Endothelial cell of umbilical vein (primary cell): ENCODE measurements at regions of chr4 and their contacts with region 1.

Region 1: DNA sequence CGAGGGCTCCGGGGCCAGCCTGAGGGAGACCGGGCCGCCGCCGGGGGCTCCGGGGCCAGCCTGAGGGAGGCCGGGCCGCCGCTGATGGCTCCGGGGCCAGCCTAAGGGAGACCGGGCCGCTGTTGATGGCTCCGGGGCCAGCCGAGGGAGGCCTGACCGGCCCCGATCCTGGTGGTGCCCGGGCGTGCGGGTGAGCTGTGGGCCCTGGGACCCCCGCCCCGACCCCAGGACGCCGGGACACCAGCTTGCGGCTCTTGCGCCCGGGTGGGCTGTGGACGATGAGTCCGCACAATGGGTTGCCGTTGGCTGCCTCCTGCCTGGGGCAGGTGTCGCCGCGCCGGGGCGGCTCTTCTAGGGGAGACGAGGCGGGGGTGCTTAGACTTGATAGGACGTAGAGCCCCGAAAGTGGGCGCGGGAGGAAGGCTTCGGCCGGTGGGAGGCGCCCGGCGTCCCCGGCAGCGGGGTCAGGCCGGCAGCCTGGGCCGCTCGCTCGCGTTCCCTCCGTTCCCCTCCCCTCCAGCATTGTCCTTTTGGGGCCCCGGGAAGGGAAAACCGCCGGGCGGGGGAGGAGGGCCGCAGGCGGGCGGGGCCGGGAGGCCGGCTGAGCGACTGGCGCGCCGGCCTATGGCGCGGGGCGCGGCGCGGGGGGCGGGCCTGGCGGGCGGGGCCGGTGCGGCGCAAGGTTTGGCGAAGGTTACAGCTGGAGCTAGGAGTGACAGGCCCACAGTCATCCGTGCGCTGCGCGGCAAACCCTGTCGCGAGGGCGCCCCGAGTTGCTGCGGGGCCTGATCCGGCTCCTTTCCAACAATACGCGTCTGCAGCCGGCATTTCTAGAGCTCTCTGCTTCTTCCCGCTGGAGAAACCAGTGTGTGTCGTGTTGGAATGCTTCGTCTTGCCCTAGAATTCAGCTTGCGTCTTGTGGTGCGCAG is 790 bp downstream of the KIAA0232 start:
- DNase-seq: peak; percentile 84
- H3K4me3 ChIP-seq: peak overlapping the region; percentile 75 to 99 (median 83)
- H3K27ac ChIP-seq: peak overlapping the region; percentile 89
- H3K4me1 ChIP-seq: peaks cover 10% of the 10 kb centered on the region
- H3K27me3 ChIP-seq: no peaks in the 10 kb centered on the region
- CTCF ChIP-seq: no peak
- POLR2A ChIP-seq: no peak

Region 2: DNA sequence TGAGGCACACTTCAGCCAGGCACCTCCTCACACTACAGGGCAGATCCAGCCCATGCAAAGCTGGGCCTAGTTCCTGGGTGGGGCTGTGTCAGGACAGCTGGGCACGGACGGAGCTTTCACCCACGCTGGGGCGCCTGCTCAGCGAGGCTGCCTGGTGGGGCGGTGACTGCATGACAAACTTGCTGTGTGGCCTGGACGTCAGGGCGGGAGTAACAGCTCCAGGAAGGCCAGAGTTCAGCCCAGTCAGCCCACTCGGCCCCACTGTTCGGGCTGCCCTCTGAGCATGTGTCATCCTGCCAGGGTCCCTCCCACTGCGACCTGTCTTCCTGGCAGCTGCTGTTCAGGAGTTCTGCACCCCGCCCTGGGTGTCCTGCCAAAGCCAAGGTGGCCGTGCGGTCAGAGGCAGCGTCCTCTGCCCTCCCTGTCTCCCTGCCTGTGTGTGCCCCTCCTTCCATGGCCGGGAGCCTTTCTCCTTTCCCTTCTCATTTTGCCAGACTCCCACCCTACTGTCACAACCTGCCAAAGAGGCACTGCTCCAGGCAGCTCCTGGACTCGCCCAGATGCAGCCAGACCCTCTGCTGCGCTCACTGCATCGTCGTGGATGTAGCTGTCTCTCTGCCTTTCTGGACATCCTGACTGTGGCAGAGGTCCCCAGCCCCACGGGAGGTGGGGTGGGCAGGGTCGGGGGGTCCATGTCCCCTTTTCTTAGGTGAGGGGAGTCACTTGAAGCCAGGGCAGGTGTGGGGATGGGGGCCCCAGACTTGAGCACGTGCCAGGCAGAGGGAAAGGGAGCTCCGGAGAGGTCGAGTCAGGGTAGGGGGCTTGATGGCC is 33.8 kb before region 1 on chr4:
- CTCF ChIA-PET with region 1: no interaction called
- POLR2A ChIA-PET with region 1: no interaction called
- dilution Hi-C with region 1: no loop called
- intact Hi-C with region 1: no loop called
- DNase-seq: peak; percentile 34
- H3K4me3 ChIP-seq: no peak overlapping the region
- H3K27ac ChIP-seq: no peak overlapping the region
- H3K4me1 ChIP-seq: peaks cover 6% of the 10 kb centered on the region
- H3K27me3 ChIP-seq: no peaks in the 10 kb centered on the region
- CTCF ChIP-seq: no peak
- POLR2A ChIP-seq: no peak

Region 3: GRCh38 chr4:6802025-6802424 is 18.7 kb after region 1 on chr4:
- CTCF ChIA-PET with region 1: interaction called, 10 read pairs
- POLR2A ChIA-PET with region 1: no interaction called
- dilution Hi-C with region 1: no loop called
- intact Hi-C with region 1: loop called (anchors 1 kb)
- DNase-seq: no peak
- H3K4me3 ChIP-seq: no peak overlapping the region
- H3K27ac ChIP-seq: no peak overlapping the region
- H3K4me1 ChIP-seq: peaks cover 9% of the 10 kb centered on the region
- H3K27me3 ChIP-seq: no peaks in the 10 kb centered on the region
- CTCF ChIP-seq: no peak
- POLR2A ChIP-seq: no peak

Region 4: GRCh38 chr4:6806924-6807636 is 23.8 kb after region 1 on chr4:
- CTCF ChIA-PET with region 1: no interaction called
- POLR2A ChIA-PET with region 1: no interaction called
- dilution Hi-C with region 1: no loop called
- intact Hi-C with region 1: loop called (anchors 1 kb)
- DNase-seq: peak; percentile 41
- H3K4me3 ChIP-seq: no peak overlapping the region
- H3K27ac ChIP-seq: peak overlapping the region; percentile 53
- H3K4me1 ChIP-seq: peaks cover 14% of the 10 kb centered on the region
- H3K27me3 ChIP-seq: no peaks in the 10 kb centered on the region
- CTCF ChIP-seq: no peak
- POLR2A ChIP-seq: no peak

Region 5: GRCh38 chr4:6824071-6824470 is 40.8 kb after region 1 on chr4:
- CTCF ChIA-PET with region 1: no interaction called
- POLR2A ChIA-PET with region 1: no interaction called
- dilution Hi-C with region 1: no loop called
- intact Hi-C with region 1: no loop called
- DNase-seq: peak; percentile 14
- H3K4me3 ChIP-seq: no peak overlapping the region
- H3K27ac ChIP-seq: no peak overlapping the region
- H3K4me1 ChIP-seq: no peaks in the 10 kb centered on the region
- H3K27me3 ChIP-seq: no peaks in the 10 kb centered on the region
- CTCF ChIP-seq: no peak
- POLR2A ChIP-seq: no peak

Region 6: DNA sequence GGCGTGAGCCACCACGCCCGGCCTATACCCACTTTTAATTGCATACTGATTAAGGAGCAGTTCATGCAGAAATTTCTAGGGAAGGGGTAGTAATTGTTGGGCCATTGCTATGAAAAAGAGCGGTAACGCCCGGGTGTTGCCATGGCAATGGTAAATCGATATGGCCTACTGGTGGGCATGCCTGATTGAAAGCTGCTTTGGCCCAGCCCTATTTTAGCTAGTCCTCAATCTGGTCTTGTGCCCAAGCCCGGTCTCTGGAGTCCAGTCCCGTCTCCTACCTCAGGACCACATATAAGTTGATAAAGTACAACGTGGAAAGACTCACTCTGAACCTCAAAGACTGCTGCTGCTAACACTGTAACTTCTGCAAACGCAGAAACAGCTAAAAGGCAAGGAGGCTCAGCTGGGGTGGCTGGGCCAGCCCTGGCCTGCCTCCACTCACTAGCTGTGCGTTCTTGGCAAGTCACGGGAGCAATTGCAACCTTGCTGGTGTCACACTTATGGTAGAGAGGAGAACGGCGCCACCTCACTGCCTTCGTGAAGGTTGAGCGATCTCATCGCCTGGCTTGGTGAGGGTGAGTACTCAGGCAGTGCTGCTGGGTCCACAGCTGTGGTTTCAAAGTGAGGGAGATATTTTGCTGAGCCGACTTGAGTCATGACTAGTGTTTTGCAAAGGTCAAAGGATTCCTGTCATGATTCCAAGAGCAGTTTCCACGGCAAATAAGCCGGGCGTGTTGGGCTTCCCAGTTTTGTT is 341.5 kb after region 1 on chr4:
- CTCF ChIA-PET with region 1: no interaction called
- POLR2A ChIA-PET with region 1: no interaction called
- dilution Hi-C with region 1: no loop called
- intact Hi-C with region 1: no loop called
- DNase-seq: peak; percentile 4
- H3K4me3 ChIP-seq: no peak overlapping the region
- H3K27ac ChIP-seq: no peak overlapping the region
- H3K4me1 ChIP-seq: no peaks in the 10 kb centered on the region
- H3K27me3 ChIP-seq: no peaks in the 10 kb centered on the region
- CTCF ChIP-seq: no peak
- POLR2A ChIP-seq: no peak